Heart right ventricle (tissue), 16 donors: ENCODE measurements at regions of chrX and their contacts with region 1.

Region 1: GRCh38 chrX:28847423-28847822 is 260.2 kb downstream of the IL1RAPL1 start:
- DNase-seq: peak; percentile 16 to 17
- ATAC-seq: peak in 7 of 8 donors; percentile 34 to 94 (median 84)
- H3K4me3 ChIP-seq: no peak overlapping the region
- H3K27ac ChIP-seq: peak overlapping the region in 2 of 10 donors; percentile 16 to 36
- H3K4me1 ChIP-seq: no peaks in the 10 kb centered on the region
- H3K27me3 ChIP-seq: no peaks in the 10 kb centered on the region
- CTCF ChIP-seq: no peak

Region 2: DNA sequence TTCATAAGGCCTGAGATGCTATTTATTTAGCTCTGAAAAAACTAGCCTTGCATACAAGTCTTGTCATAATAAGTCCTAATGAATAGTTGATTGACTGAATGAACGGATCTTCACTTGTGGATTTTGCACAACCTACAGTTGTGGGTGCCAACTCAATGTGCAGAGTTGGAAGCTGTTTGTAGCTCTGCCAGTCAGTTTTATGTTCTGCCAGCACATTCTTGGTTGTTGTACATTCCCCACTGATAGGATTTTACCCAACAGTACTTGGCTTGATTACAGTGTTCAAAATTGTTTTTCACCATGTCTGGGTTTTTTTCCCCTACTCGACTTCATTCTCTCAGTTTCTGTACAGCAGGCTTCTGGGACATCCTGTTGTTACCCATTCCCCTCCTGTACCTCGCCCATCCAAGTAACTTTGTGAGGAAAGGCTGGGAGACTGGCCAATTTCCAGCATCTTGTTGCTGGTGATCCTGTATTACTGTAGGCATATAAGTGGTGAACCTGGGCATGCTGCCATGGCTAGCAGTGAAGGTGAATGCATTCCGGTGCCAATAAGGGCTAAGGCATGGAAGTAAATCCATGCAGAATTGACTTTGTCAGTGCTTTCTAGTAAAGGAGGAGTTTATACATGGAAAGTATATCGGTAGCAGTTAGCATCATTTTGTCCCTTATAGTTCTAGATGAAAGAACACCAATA is 237.4 kb before region 1 on chrX:
- intact Hi-C with region 1: loop called in 1 of 10 experiments (anchors 5 kb)
- DNase-seq: peak; percentile 32 to 48
- ATAC-seq: peak in 7 of 8 donors; percentile 44 to 84 (median 84)
- H3K4me3 ChIP-seq: no peak overlapping the region
- H3K27ac ChIP-seq: peak overlapping the region in 5 of 10 donors; percentile 2 to 63 (median 58)
- H3K4me1 ChIP-seq: peaks cover 0 to 7% (median 0%) of the 10 kb centered on the region in 9 donors
- H3K27me3 ChIP-seq: no peaks in the 10 kb centered on the region
- CTCF ChIP-seq: no peak

Region 3: GRCh38 chrX:28756647-28757046 is 90.8 kb before region 1 on chrX:
- intact Hi-C with region 1: loop called in 1 of 10 experiments (anchors 5 kb)
- DNase-seq: no peak
- ATAC-seq: peak in 5 of 8 donors; percentile 42 to 82 (median 68)
- H3K4me3 ChIP-seq: no peak overlapping the region
- H3K27ac ChIP-seq: no peak overlapping the region
- H3K4me1 ChIP-seq: peaks cover 0 to 12% (median 0%) of the 10 kb centered on the region in 9 donors
- H3K27me3 ChIP-seq: no peaks in the 10 kb centered on the region
- CTCF ChIP-seq: no peak

Region 4: DNA sequence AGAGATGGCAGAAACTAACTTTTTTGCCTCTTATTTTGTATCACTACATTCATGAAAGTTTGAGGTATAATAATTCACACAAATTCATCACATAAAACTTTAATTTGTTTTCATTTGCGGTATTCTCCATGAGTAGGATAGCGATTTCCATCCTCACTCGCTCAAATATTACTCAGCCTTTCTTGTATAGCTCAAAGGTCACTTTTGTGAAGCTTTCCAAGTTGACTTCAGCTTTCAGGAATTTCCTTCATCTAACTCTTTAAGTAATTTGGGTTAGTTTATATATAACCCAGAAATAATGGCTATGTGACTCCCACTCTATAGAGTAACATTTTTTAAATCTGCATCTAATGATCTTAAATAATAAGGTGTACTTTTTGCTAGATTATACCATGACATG is 54.2 kb after region 1 on chrX:
- intact Hi-C with region 1: loop called in 1 of 10 experiments (anchors 10 kb)
- DNase-seq: no peak
- ATAC-seq: no peak
- H3K4me3 ChIP-seq: no peak overlapping the region
- H3K27ac ChIP-seq: no peak overlapping the region
- H3K4me1 ChIP-seq: no peaks in the 10 kb centered on the region
- H3K27me3 ChIP-seq: no peaks in the 10 kb centered on the region
- CTCF ChIP-seq: no peak